Psoas muscle (tissue), 8 donors: ENCODE measurements at regions of chr19 and their contacts with region 1.

Region 1: DNA sequence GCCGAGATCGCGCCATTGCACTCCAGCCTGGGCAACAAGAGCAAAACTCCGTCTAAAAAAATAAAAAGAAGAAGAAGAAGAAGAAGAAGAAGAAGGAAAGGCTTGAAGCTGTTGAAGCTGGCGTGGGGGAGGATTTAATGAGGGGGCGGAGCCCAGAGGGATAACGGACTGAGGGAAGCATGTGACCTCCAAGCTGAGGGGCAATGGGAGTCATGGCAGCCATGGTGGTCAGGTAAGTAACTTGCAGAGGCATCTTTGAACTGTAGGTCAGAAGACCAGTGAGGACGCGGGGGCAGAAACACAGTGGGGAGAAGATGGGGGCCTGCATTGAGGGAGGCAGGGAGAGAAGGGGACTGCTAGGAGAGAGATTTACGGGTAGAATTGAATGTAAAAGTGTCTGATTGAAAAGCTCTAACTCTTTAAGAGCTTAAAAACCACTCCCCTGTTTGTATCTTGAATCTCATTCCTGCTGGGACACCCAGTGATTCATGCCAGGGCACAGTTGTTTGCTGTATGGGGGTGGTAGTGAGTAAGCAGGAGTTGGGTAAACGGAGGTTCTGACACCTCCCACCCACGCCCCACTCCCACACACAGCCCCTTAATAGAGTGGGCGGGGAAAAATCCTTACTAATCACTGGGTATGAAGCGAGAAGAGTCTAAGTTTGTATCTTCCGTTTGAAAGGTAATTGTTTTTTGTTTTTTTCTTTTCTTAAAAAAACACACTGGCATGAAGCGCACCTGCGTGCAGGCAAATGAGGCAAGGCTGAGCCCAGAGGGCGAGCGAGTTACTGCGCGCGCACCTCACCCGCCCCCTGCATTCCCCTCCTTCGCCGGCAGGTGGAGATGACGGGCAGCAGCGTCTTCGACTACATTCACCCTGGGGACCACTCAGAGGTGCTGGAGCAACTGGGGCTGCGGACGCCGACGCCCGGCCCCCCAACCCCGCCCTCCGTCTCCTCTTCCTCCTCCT is 13.0 kb downstream of the TMEM160 start:
- DNase-seq: peak; percentile 83 to 92
- ATAC-seq: peak; percentile 90 to 97 (median 97)
- H3K4me3 ChIP-seq: peak overlapping the region; percentile 56
- H3K27ac ChIP-seq: no peak overlapping the region
- H3K4me1 ChIP-seq: peaks cover 8% of the 10 kb centered on the region
- H3K27me3 ChIP-seq: peaks cover 0 to 14% (median 0%) of the 10 kb centered on the region in 3 donors
- CTCF ChIP-seq: peak; percentile 97

Region 2: DNA sequence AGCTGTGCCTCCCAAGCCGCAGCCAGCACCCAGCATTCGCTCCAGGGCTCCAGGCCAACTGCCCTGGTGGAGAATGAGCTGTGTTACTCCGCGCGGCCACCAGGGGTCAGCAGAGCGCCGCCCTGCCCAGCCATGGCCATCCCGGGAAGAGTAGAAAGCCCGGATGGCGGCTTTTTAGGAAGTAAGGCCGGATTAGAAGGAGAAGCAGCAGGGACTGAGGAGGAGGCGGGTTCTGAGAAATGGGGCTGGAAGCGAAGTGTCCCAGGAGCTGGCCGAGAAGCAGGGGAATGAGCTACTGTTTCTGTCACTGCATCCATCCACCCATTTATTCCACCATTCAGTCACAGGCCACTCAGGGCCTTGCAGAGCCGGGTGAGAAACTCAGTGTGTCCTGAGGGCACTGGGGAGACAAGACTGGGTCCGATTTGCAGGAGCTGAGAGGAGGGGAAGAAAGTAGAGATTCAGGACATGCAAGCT is 22.3 kb before region 1 on chr19:
- intact Hi-C with region 1: loop called in 1 of 2 experiments (anchors 2 kb)
- DNase-seq: peak; percentile 82 to 90
- ATAC-seq: peak; percentile 96 to 99 (median 98)
- H3K4me3 ChIP-seq: no peak overlapping the region
- H3K27ac ChIP-seq: no peak overlapping the region
- H3K4me1 ChIP-seq: peaks cover 6% of the 10 kb centered on the region
- H3K27me3 ChIP-seq: peaks cover 0 to 5% (median 0%) of the 10 kb centered on the region in 3 donors
- CTCF ChIP-seq: peak; percentile 99

Region 3: GRCh38 chr19:47081111-47081510 is 45.7 kb after region 1 on chr19:
- intact Hi-C with region 1: no loop called
- DNase-seq: no peak
- ATAC-seq: no peak
- H3K4me3 ChIP-seq: no peak overlapping the region
- H3K27ac ChIP-seq: no peak overlapping the region
- H3K4me1 ChIP-seq: peaks cover 8% of the 10 kb centered on the region
- H3K27me3 ChIP-seq: no peaks in the 10 kb centered on the region
- CTCF ChIP-seq: no peak

Region 4: DNA sequence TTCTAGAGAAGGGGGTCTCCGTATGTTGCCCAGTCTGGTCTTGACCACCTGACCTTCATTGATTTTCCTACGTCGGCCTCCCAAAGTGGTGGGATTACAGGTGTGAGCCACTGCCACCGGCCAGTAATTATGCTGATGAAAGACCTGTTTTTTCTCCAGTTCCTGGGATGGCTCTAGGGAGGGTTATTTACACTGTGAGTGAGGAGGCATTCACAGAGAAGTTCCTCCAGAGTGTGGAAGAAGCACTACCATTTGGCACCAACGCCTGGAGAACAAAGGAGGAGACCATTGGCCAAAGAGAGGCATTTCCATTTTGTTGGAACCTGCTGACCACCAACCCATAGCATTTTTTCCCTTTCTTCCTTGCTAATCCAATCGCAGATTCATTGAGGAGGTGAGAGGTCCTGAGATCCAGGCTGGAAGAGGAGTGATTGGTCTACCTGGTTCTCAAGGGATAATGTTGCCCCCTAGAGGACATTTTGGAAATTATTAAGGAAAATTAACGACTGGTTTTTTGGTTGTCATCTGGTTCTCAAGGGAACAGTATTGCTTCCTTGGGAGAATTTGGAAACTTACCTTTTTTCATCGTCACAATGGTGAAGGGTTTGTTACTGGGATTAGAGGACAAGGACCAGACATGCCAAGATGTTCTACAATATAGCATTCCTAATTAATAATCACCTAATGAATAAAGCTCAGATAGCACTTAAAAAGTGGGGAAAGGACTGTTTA is 89.7 kb after region 1 on chr19:
- intact Hi-C with region 1: loop called (anchors 1 to 5 kb)
- DNase-seq: no peak
- ATAC-seq: peak; percentile 69 to 89 (median 76)
- H3K4me3 ChIP-seq: no peak overlapping the region
- H3K27ac ChIP-seq: no peak overlapping the region
- H3K4me1 ChIP-seq: peaks cover 3% of the 10 kb centered on the region
- H3K27me3 ChIP-seq: no peaks in the 10 kb centered on the region
- CTCF ChIP-seq: peak; percentile 76

Region 5: GRCh38 chr19:47130591-47131227 is 95.3 kb after region 1 on chr19 and contains the start of gene SAE1:
- intact Hi-C with region 1: loop called in 1 of 2 experiments (anchors 1 kb)
- DNase-seq: peak; percentile 94 to 97
- ATAC-seq: peak; percentile 91 to 98 (median 94)
- H3K4me3 ChIP-seq: peak within 1 kb of the TSS; percentile 80
- H3K27ac ChIP-seq: peak within 1 kb of the TSS; percentile 77
- H3K4me1 ChIP-seq: no peaks in the 10 kb centered on the region
- H3K27me3 ChIP-seq: no peaks in the 10 kb centered on the region
- CTCF ChIP-seq: peak; percentile 48
- total RNA-seq, gene SAE1: 37.8 to 55.8 (median 41.5) TPM